ENCODE measurements at regions of chr18 and their contacts with region 1.

Region 1: GRCh38 chr18:29874519-29875098 is 1167.9 kb downstream of the DSC3 start:
- DNase-seq: peak; percentile 4
- CTCF ChIP-seq: peak; percentile 41

Region 2: GRCh38 chr18:29862824-29863223 is 11.8 kb before region 1 on chr18:
- CTCF ChIA-PET with region 1: interaction called, 11 read pairs
- POLR2A ChIA-PET with region 1: no interaction called
- DNase-seq: no peak
- CTCF ChIP-seq: no peak

Region 3: DNA sequence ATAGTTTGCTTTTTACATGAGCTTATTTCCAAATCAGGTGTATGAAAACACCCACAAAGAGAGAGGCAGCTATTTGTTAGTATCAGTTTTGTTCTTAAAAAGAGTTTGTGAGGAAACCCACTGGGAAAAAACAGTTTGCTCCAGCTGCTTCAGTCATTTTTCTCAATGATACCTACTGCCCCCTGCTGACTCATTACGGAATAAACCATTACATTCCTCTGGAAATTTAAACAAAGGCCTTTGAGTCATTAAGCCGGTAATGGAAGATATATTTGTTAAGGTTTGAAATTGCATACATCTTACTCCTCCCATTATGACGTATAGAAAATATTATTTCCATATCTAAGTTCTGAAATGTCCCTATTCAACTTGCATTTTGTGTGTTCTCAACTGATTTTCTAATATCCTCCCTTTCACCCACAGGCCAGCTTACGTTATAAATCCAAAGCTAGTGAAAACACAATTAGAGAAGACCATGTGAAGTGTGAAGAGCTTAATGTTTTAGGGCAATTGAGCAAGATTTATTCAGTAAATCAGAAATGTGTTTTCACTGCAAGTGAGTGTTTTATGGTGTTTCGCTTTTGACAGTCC is 406.4 kb after region 1 on chr18:
- CTCF ChIA-PET with region 1: interaction called, 47 read pairs
- POLR2A ChIA-PET with region 1: no interaction called
- DNase-seq: no peak
- CTCF ChIP-seq: peak; percentile 54

Region 4: DNA sequence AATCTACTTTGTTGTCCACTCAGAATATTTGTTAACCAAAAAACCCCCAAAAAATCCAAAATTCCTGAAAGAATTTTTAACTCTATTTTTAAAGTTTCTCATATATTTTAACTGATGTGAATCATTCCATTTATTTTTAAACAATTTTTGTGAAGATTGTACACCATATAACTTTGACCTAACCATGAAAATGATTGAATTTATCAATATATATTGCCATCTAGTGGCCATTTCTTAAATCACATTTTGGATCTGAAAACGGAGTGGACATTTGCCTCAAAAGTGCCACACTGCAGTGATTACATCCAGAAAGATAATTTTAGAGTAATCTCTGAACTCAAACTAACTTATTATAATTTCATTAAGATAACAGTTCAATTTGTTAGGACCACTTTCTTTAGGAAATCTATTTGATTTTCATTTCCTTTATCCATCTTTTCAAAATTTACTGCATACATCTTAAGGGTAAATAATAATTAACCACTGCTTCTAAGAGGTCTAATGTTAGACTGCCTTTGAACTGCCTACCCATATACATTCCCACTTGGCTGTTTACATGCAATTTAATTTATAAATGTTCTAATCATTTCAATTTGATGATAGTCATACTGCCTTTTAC is 1096.8 kb after region 1 on chr18:
- CTCF ChIA-PET with region 1: interaction called, 16 read pairs
- POLR2A ChIA-PET with region 1: no interaction called
- DNase-seq: peak; percentile 14
- CTCF ChIP-seq: peak; percentile 49